ENCODE measurements at regions of chr20 and their contacts with region 1.

Region 1: DNA sequence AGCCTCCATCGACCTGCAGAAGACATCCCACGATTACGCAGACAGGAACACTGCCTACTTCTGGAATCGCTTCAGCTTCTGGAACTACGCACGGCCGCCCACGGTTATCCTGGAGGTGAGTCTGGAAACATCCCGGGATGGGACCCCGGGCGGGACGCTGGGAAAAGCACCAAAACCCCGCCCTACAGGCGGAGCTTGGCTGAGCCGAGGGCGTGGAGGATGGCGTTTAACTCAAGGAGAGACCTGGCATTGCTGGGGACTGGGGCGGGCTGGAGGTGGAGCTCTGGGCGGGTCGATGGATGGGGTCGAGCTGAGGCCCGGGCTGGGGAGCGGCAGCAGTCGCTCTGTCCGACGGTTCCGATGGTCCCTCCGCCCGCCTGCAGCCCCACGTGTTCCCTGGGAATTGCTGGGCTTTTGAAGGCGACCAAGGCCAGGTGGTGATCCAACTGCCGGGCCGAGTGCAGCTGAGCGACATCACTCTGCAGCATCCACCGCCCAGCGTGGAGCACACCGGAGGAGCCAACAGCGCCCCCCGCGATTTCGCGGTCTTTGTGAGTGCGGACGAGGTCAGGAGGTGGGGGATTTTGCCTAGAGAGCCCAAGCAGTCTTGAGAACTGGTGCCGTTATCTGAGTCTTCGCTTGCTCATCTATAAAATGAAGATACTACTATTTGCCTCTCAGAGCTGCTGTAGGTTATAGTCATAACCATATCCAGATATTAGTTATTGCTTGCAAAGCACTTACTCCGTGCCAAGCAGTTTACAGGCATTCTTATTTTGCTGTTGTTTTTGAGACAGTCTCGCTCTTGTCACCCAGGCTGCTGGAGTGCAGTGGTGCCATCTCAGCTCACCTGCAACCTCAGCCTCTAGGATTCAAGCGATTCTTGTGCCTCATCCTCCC is 3.8 kb downstream of the SPAG4 start:
- DNase-seq: peak; percentile 93
- ATAC-seq: peak; percentile 51
- H3K4me3 Mint-ChIP-seq: peak overlapping the region; percentile 83
- H3K27ac Mint-ChIP-seq: peak overlapping the region; percentile 92
- H3K4me1 Mint-ChIP-seq: peaks cover 48% of the 10 kb centered on the region
- H3K27me3 Mint-ChIP-seq: peaks cover 2% of the 10 kb centered on the region

Region 2: GRCh38 chr20:35410613-35411012 is 208.8 kb before region 1 on chr20:
- CTCF ChIA-PET with region 1: no interaction called
- POLR2A ChIA-PET with region 1: no interaction called
- intact Hi-C with region 1: loop called in 1 of 2 experiments (anchors 5 kb)
- DNase-seq: no peak
- ATAC-seq: no peak
- H3K4me3 Mint-ChIP-seq: peak overlapping the region; percentile 91
- H3K27ac Mint-ChIP-seq: peak overlapping the region; percentile 100
- H3K4me1 Mint-ChIP-seq: peaks cover 21% of the 10 kb centered on the region
- H3K27me3 Mint-ChIP-seq: no peaks in the 10 kb centered on the region

Region 3: GRCh38 chr20:35629427-35630145 is 10.1 kb after region 1 on chr20:
- CTCF ChIA-PET with region 1: interaction called, 16 read pairs
- POLR2A ChIA-PET with region 1: interaction called, 3 read pairs
- intact Hi-C with region 1: no loop called
- DNase-seq: no peak
- ATAC-seq: no peak
- H3K4me3 Mint-ChIP-seq: no peak overlapping the region
- H3K27ac Mint-ChIP-seq: no peak overlapping the region
- H3K4me1 Mint-ChIP-seq: no peaks in the 10 kb centered on the region
- H3K27me3 Mint-ChIP-seq: no peaks in the 10 kb centered on the region

Region 4: GRCh38 chr20:35699127-35699975 is 79.9 kb after region 1 on chr20 and contains the starts of genes NFS1 and ROMO1:
- CTCF ChIA-PET with region 1: interaction called, 4 read pairs
- POLR2A ChIA-PET with region 1: interaction called, 9 read pairs
- intact Hi-C with region 1: loop called (anchors 1 to 5 kb)
- DNase-seq: peak; percentile 94
- ATAC-seq: peak; percentile 92
- H3K4me3 Mint-ChIP-seq: peak within 1 kb of the TSS; percentile 87
- H3K27ac Mint-ChIP-seq: peak within 1 kb of the TSS; percentile 98
- H3K4me1 Mint-ChIP-seq: peaks cover 44% of the 10 kb centered on the region
- H3K27me3 Mint-ChIP-seq: no peaks in the 10 kb centered on the region
- total RNA-seq, gene NFS1: 43.2 to 44.6 TPM
- total RNA-seq, gene ROMO1: 50.4 to 112 TPM

Region 5: DNA sequence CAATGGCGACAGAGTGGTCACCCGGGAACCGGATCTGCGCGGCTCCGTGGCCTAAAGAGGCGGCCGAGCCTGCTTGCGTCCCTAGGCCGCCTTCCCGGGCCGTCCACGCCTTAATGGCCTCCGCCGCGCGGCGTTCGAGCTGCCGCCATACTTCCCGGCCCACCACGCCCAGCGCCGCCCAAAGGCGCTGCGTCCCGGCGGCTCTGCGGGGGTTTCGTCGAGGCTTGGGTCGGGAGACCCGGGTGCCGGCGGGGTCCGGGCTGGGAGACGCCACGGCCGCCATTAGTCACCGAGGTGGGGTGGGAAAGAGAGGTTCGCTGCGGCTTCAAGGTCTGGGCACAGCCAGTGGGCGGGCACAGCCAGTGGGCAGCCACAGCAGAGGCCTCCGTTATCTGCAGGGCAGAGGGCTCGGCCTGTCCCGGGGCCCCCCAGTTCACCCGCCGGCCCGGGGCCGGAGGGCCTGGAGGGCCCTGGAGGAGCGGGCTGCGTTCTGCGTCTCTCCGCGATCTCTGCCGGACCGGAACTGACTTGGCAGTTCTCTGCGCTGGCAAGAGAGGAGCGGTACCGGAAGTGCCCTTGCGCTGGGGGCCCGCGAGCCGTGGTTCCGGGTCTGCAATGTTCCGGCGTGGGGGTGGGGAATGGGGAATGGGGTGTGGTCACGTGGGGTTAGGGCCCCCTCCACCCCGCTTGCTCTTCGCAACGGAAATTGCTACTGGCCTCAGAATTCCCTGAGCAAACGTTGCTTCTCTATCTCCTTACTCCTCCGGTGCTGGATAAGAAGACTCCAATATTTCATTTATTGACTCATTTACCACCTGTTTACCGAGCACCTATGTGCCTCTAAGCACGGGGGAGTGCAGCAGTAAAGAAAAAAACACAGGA is 431.2 kb after region 1 on chr20:
- CTCF ChIA-PET with region 1: no interaction called
- POLR2A ChIA-PET with region 1: no interaction called
- intact Hi-C with region 1: loop called in 1 of 2 experiments (anchors 5 kb)
- DNase-seq: peak; percentile 95
- ATAC-seq: peak; percentile 98
- H3K4me3 Mint-ChIP-seq: peak overlapping the region; percentile 96
- H3K27ac Mint-ChIP-seq: peak overlapping the region; percentile 91
- H3K4me1 Mint-ChIP-seq: peaks cover 34% of the 10 kb centered on the region
- H3K27me3 Mint-ChIP-seq: no peaks in the 10 kb centered on the region

Measured in activated CD4-positive, alpha-beta T cell treated with anti-CD3 and anti-CD28 coated beads for 36 hours (primary cell).